Activated CD4-positive, alpha-beta T cell treated with anti-CD3 and anti-CD28 coated beads for 36 hours (primary cell): ENCODE measurements at regions of chr6 and their contacts with region 1.

Region 1: GRCh38 chr6:25992413-25993037 is 29.9 kb downstream of the TRIM38 start:
- DNase-seq: peak; percentile 97
- ATAC-seq: peak; percentile 94
- H3K4me3 Mint-ChIP-seq: peak overlapping the region; percentile 82
- H3K27ac Mint-ChIP-seq: peak overlapping the region; percentile 95
- H3K4me1 Mint-ChIP-seq: peaks cover 27% of the 10 kb centered on the region
- H3K27me3 Mint-ChIP-seq: no peaks in the 10 kb centered on the region

Region 2: GRCh38 chr6:25670793-25671513 is 321.6 kb before region 1 on chr6:
- CTCF ChIA-PET with region 1: no interaction called
- POLR2A ChIA-PET with region 1: no interaction called
- intact Hi-C with region 1: no loop called
- DNase-seq: no peak
- ATAC-seq: no peak
- H3K4me3 Mint-ChIP-seq: no peak overlapping the region
- H3K27ac Mint-ChIP-seq: no peak overlapping the region
- H3K4me1 Mint-ChIP-seq: no peaks in the 10 kb centered on the region
- H3K27me3 Mint-ChIP-seq: peaks cover 8% of the 10 kb centered on the region

Region 3: GRCh38 chr6:25717866-25718740 is 274.4 kb before region 1 on chr6:
- CTCF ChIA-PET with region 1: interaction called, 7 read pairs
- POLR2A ChIA-PET with region 1: no interaction called
- intact Hi-C with region 1: loop called in 1 of 2 experiments (anchors 1 kb)
- DNase-seq: no peak
- ATAC-seq: no peak
- H3K4me3 Mint-ChIP-seq: no peak overlapping the region
- H3K27ac Mint-ChIP-seq: no peak overlapping the region
- H3K4me1 Mint-ChIP-seq: peaks cover 3% of the 10 kb centered on the region
- H3K27me3 Mint-ChIP-seq: peaks cover 13% of the 10 kb centered on the region

Region 4: GRCh38 chr6:25942561-25943147 is 49.9 kb before region 1 on chr6:
- CTCF ChIA-PET with region 1: interaction called, 3 read pairs
- POLR2A ChIA-PET with region 1: no interaction called
- intact Hi-C with region 1: loop called in 1 of 2 experiments (anchors 1 kb)
- DNase-seq: no peak
- ATAC-seq: peak; percentile 70
- H3K4me3 Mint-ChIP-seq: no peak overlapping the region
- H3K27ac Mint-ChIP-seq: no peak overlapping the region
- H3K4me1 Mint-ChIP-seq: peaks cover 22% of the 10 kb centered on the region
- H3K27me3 Mint-ChIP-seq: peaks cover 4% of the 10 kb centered on the region

Region 5: DNA sequence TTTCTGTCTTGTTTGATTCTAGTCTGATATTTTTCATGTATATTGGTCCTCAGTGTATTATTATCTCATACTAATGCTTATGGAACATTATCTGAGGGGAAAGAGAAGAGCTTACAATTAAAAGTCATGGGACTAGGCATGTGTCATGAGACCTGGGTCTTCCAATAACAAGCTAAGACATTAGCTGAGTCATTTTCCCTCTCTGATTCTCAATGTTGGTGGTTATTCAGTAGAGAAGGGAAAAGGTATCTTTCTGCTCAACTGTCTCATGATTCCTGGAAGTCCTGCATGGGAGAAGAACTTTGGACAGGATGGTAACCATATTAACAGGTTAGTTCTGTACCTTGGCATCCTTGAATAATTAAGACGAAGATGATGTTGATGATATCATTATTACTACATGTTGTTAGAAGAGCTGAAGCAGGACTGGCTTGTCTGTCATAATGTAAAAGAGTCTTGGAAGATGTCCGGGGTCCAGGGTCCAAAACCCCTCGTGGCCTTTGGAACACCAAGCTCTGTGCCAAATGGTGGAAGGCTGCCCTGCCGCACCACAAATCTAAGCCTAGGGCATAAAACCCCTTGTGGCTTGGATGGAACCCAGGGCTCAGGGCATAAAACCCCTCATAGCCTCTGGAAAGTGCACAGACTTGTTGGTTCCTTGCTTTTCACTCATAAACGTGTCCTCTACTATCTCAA is 10.8 kb before region 1 on chr6:
- CTCF ChIA-PET with region 1: interaction called, 22 read pairs
- POLR2A ChIA-PET with region 1: no interaction called
- intact Hi-C with region 1: no loop called
- DNase-seq: no peak
- ATAC-seq: peak; percentile 57
- H3K4me3 Mint-ChIP-seq: no peak overlapping the region
- H3K27ac Mint-ChIP-seq: peak overlapping the region; percentile 28
- H3K4me1 Mint-ChIP-seq: peaks cover 17% of the 10 kb centered on the region
- H3K27me3 Mint-ChIP-seq: no peaks in the 10 kb centered on the region

Region 6: DNA sequence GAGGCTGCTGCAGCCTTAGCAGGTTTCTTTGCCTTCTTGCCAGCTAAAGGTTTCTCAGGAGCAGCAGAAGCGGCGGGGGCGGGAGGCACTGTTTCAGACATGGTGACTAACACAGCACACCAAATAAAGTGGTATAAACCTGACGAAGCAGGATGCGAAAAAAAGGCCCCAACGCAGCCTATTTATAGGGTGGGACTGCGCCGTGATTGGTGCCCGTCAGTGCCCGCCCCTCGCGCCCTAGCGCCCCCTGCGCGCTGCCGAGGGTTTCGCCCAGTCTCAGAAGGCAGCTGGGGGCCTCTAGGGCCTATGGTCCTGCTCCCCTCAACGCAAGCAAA is 25.1 kb after region 1 on chr6:
- CTCF ChIA-PET with region 1: interaction called, 48 read pairs
- POLR2A ChIA-PET with region 1: interaction called, 30 read pairs
- intact Hi-C with region 1: loop called (anchors 1 kb)
- DNase-seq: peak; percentile 93
- ATAC-seq: peak; percentile 38
- H3K4me3 Mint-ChIP-seq: peak overlapping the region; percentile 72
- H3K27ac Mint-ChIP-seq: peak overlapping the region; percentile 85
- H3K4me1 Mint-ChIP-seq: peaks cover 32% of the 10 kb centered on the region
- H3K27me3 Mint-ChIP-seq: no peaks in the 10 kb centered on the region

Region 7: DNA sequence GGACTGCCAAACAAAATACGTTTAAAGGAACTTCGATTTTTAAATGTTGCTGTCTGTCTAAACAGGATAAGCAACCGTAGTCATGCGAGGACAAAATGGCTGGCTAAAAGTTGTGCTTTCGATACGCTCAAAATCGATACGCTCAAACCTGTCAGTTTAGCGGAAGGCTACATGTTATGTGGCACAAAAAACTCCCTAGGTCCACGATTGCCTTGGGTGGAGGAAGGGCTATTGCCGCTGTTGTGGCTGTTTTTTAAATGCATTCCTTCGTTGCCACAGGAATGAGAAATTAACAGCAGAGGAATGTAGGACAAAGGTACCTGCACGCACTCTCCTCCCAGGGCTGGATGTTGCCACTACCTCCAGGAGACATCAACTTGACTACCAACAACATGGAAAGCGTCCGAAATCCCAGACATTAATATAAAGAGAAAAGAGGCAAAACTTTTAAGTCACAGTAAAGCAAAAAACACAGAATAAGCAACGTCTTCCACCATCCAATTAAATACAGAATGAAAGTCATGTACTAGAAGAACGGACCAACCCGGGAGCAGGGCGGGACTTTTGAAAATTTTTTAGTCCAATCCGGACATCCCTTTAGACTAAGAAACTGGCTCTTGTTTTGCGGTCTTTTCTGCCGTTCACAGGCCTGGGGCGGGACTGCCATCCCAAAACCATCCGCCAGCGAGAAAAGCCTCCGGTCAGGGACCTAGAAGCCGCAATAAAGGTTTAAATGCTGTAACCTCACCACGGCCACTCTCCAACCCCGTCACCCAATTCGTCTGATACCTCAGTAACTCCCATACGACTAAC is 62.5 kb after region 1 on chr6:
- CTCF ChIA-PET with region 1: no interaction called
- POLR2A ChIA-PET with region 1: no interaction called
- intact Hi-C with region 1: loop called in 1 of 2 experiments (anchors 2 kb)
- DNase-seq: peak; percentile 91
- ATAC-seq: peak; percentile 70
- H3K4me3 Mint-ChIP-seq: peak overlapping the region; percentile 96
- H3K27ac Mint-ChIP-seq: peak overlapping the region; percentile 99
- H3K4me1 Mint-ChIP-seq: peaks cover 13% of the 10 kb centered on the region
- H3K27me3 Mint-ChIP-seq: no peaks in the 10 kb centered on the region

Region 8: GRCh38 chr6:27503436-27504030 is 1511.0 kb after region 1 on chr6:
- CTCF ChIA-PET with region 1: no interaction called
- POLR2A ChIA-PET with region 1: no interaction called
- intact Hi-C with region 1: no loop called
- DNase-seq: peak; percentile 87
- ATAC-seq: peak; percentile 40
- H3K4me3 Mint-ChIP-seq: peak overlapping the region; percentile 88
- H3K27ac Mint-ChIP-seq: peak overlapping the region; percentile 83
- H3K4me1 Mint-ChIP-seq: peaks cover 26% of the 10 kb centered on the region
- H3K27me3 Mint-ChIP-seq: peaks cover 4% of the 10 kb centered on the region